ENCODE measurements at regions of chr4 and their contacts with region 1.

Region 1: DNA sequence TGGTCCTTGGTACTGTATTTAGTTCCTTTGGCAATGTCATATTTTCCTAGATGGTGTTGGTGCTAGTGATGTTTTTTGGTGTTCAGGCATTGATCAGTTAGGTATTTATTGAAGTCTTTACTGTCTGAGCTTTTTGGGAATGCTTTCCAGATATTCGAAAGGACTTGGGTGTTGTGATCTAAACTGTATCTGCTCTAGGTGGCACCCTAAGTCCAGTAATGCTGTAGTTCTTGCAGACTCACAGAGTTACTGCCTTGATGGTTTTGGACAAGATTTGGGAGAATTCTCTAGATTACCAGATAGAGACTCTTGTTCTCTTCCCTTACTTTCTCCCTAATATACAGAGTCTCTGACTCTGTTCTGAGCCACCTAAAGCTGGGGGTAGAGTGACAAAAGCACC is 513.6 kb upstream of the PITX2 start:
- DNase-seq: peak; percentile 57
- H3K4me3 ChIP-seq: no peak overlapping the region
- H3K27ac ChIP-seq: no peak overlapping the region
- H3K4me1 ChIP-seq: no peaks in the 10 kb centered on the region
- H3K27me3 ChIP-seq: no peaks in the 10 kb centered on the region

Region 2: GRCh38 chr4:111602848-111603247 is 466.4 kb after region 1 on chr4:
- in situ Hi-C with region 1: loop called (anchors 25 kb)
- DNase-seq: peak; percentile 45
- H3K4me3 ChIP-seq: no peak overlapping the region
- H3K27ac ChIP-seq: no peak overlapping the region
- H3K4me1 ChIP-seq: peaks cover 20% of the 10 kb centered on the region
- H3K27me3 ChIP-seq: no peaks in the 10 kb centered on the region